RWPE1 (cell line): ENCODE measurements at regions of chr1 and their contacts with region 1.

Region 1: DNA sequence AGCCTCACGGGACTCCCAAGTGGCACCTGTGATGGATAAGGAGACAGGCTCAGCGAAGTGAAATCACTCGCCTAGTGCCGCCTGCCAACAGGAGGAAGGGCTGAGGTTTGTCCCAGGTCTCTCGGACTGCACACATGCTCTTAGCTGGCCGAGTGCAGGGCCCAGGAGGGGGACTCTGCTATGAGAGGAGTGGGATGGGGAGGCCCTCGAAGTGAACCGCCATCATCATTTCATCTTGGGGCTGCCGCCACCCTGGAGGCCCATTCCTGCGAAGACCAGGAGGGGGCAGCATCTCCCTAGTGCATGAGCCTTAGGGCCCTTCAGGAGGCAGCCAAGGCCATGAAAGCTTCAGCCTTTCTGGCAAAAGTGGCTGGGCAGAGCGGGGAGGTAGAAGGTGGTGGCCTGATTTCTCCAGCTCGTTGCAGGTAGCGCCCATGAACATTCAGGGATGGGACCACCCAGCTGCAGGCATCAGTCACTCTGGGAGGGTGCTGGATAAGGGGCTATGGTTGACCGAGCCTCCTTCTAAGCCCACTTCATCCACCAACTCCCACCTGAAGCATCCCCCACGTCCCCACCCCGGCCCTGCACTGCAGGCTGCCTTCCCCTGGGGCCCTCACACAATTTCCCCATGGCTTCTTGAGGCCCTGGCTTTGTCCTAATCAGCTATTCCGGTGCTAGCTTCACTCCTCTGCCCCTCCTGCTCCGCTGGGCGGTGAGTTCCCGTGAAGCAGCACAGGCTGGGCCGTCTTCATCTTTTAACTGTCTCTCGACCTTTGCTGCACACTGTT is 17.2 kb upstream of the RASSF5 start:
- DNase-seq: peak; percentile 93
- H3K27ac ChIP-seq: no peak overlapping the region
- CTCF ChIP-seq: peak; percentile 95

Region 2: GRCh38 chr1:206550440-206550839 is 60.3 kb after region 1 on chr1:
- CTCF ChIA-PET with region 1: interaction called, 15 read pairs
- POLR2A ChIA-PET with region 1: no interaction called
- DNase-seq: no peak
- H3K27ac ChIP-seq: no peak overlapping the region
- CTCF ChIP-seq: no peak

Region 3: GRCh38 chr1:206589206-206589605 is 99.0 kb after region 1 on chr1:
- CTCF ChIA-PET with region 1: interaction called, 29 read pairs
- POLR2A ChIA-PET with region 1: no interaction called
- DNase-seq: peak; percentile 94
- H3K27ac ChIP-seq: peak overlapping the region; percentile 60
- CTCF ChIP-seq: no peak